B cell (primary cell): ENCODE measurements at regions of chr12 and their contacts with region 1.

Region 1: DNA sequence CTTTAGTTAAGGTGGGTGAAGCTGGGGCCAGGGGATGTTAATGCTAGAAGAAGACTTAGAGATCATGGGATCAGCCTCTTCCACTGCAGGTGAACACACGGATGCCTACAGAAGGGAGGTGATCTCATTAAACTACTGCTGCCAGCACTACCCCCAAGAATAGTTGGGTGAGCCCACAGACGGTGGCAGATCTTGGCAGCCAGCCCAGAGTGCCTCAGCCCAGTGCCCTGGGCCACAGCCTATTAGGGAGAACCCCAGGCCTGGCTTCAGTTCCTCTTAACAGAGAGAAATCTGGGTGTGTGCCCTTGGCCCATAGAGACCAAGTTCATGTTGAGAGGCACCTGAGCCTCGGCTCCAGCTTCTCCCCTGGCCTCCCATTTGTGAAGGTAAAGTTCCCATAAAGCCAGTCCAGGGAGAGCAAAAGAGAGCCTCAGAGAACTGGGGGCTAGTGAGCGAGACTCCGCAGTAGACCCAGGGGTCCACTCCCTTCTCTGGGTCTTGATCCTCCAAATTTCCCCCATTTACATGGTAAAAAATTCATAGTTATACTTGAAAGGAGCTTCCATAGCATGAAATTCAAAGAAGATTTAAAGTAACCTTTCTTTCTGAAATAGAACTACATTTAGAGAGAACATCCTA is 125.0 kb upstream of the CCND2 start:
- DNase-seq: peak; percentile 96
- ATAC-seq: peak; percentile 89
- H3K4me3 ChIP-seq: peak overlapping the region in 1 of 5 experiments; percentile 6
- H3K4me3 Mint-ChIP-seq: peak overlapping the region; percentile 84
- H3K27ac ChIP-seq: peak overlapping the region; percentile 80 to 90
- H3K27ac Mint-ChIP-seq: peak overlapping the region; percentile 91
- H3K4me1 ChIP-seq: peaks cover 73 to 88% of the 10 kb centered on the region in 2 donors
- H3K4me1 Mint-ChIP-seq: peaks cover 90% of the 10 kb centered on the region
- H3K27me3 ChIP-seq: no peaks in the 10 kb centered on the region
- H3K27me3 Mint-ChIP-seq: no peaks in the 10 kb centered on the region
- CTCF ChIP-seq: no peak

Region 2: GRCh38 chr12:3646561-3647241 is 501.8 kb before region 1 on chr12:
- CTCF ChIA-PET with region 1: no interaction called
- POLR2A ChIA-PET with region 1: no interaction called
- intact Hi-C with region 1: no loop called
- DNase-seq: no peak
- ATAC-seq: no peak
- H3K4me3 ChIP-seq: no peak overlapping the region
- H3K4me3 Mint-ChIP-seq: peak overlapping the region; percentile 15
- H3K27ac ChIP-seq: peak overlapping the region in 1 of 2 donors; percentile 30
- H3K27ac Mint-ChIP-seq: peak overlapping the region; percentile 57
- H3K4me1 ChIP-seq: peaks cover 17 to 20% of the 10 kb centered on the region in 2 donors
- H3K4me1 Mint-ChIP-seq: peaks cover 27% of the 10 kb centered on the region
- H3K27me3 ChIP-seq: no peaks in the 10 kb centered on the region
- H3K27me3 Mint-ChIP-seq: no peaks in the 10 kb centered on the region
- CTCF ChIP-seq: no peak

Region 3: GRCh38 chr12:3820122-3820521 is 328.4 kb before region 1 on chr12:
- CTCF ChIA-PET with region 1: no interaction called
- POLR2A ChIA-PET with region 1: no interaction called
- intact Hi-C with region 1: no loop called
- DNase-seq: no peak
- ATAC-seq: no peak
- H3K4me3 ChIP-seq: no peak overlapping the region
- H3K4me3 Mint-ChIP-seq: no peak overlapping the region
- H3K27ac ChIP-seq: no peak overlapping the region
- H3K27ac Mint-ChIP-seq: no peak overlapping the region
- H3K4me1 ChIP-seq: no peaks in the 10 kb centered on the region
- H3K4me1 Mint-ChIP-seq: peaks cover 6% of the 10 kb centered on the region
- H3K27me3 ChIP-seq: no peaks in the 10 kb centered on the region
- H3K27me3 Mint-ChIP-seq: no peaks in the 10 kb centered on the region
- CTCF ChIP-seq: no peak

Region 4: DNA sequence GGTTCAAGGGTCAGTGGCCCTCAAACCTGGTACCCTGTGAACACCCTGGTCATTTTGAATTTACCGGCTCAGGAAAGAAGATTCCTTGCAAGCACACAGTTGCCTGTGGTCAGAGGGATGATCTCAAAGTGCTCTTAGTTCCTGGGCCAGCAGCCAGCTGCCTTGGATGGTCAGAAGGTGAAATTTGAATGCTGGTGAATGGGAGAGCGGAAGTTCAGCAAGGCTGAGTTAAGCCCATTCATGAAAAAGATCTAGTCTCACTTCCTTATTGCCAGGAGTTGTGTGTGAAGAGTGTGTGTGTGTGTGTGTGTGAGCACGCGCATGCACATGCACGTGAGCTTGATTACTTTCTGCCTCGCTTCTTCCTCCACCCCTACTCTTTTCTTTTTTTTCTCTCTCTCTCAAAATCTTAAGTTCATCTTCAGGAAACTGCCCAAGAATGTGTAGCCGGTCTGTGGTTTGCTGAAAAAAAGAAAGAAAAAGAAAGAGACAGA is 30.5 kb before region 1 on chr12:
- CTCF ChIA-PET with region 1: interaction called, 16 read pairs
- POLR2A ChIA-PET with region 1: interaction called, 7 read pairs
- intact Hi-C with region 1: loop called (anchors 1 kb)
- DNase-seq: peak; percentile 90
- ATAC-seq: peak; percentile 90
- H3K4me3 ChIP-seq: peak overlapping the region in 3 of 5 experiments; percentile 21 to 56 (median 34)
- H3K4me3 Mint-ChIP-seq: peak overlapping the region; percentile 78
- H3K27ac ChIP-seq: peak overlapping the region; percentile 47 to 59
- H3K27ac Mint-ChIP-seq: peak overlapping the region; percentile 85
- H3K4me1 ChIP-seq: peaks cover 49 to 51% of the 10 kb centered on the region in 2 donors
- H3K4me1 Mint-ChIP-seq: peaks cover 54% of the 10 kb centered on the region
- H3K27me3 ChIP-seq: peaks cover 0 to 1% (median 0%) of the 10 kb centered on the region in 4 experiments
- H3K27me3 Mint-ChIP-seq: no peaks in the 10 kb centered on the region
- CTCF ChIP-seq: no peak

Region 5: GRCh38 chr12:4135919-4136605 is 12.5 kb before region 1 on chr12:
- CTCF ChIA-PET with region 1: interaction called, 5 read pairs
- POLR2A ChIA-PET with region 1: no interaction called
- intact Hi-C with region 1: loop called (anchors 1 kb)
- DNase-seq: peak; percentile 82
- ATAC-seq: peak; percentile 85
- H3K4me3 ChIP-seq: no peak overlapping the region
- H3K4me3 Mint-ChIP-seq: peak overlapping the region; percentile 11
- H3K27ac ChIP-seq: peak overlapping the region; percentile 5 to 39
- H3K27ac Mint-ChIP-seq: peak overlapping the region; percentile 61
- H3K4me1 ChIP-seq: peaks cover 41 to 50% of the 10 kb centered on the region in 2 donors
- H3K4me1 Mint-ChIP-seq: peaks cover 50% of the 10 kb centered on the region
- H3K27me3 ChIP-seq: no peaks in the 10 kb centered on the region
- H3K27me3 Mint-ChIP-seq: no peaks in the 10 kb centered on the region
- CTCF ChIP-seq: no peak

Region 6: GRCh38 chr12:4164559-4165558 is 16.3 kb after region 1 on chr12:
- CTCF ChIA-PET with region 1: interaction called, 8 read pairs
- POLR2A ChIA-PET with region 1: interaction called, 10 read pairs
- intact Hi-C with region 1: loop called (anchors 1 kb)
- DNase-seq: peak; percentile 80
- ATAC-seq: peak; percentile 77
- H3K4me3 ChIP-seq: peak overlapping the region; percentile 4 to 75 (median 65)
- H3K4me3 Mint-ChIP-seq: peak overlapping the region; percentile 88
- H3K27ac ChIP-seq: peak overlapping the region; percentile 77 to 95
- H3K27ac Mint-ChIP-seq: peak overlapping the region; percentile 90
- H3K4me1 ChIP-seq: peaks cover 34 to 35% of the 10 kb centered on the region in 2 donors
- H3K4me1 Mint-ChIP-seq: peaks cover 40% of the 10 kb centered on the region
- H3K27me3 ChIP-seq: no peaks in the 10 kb centered on the region
- H3K27me3 Mint-ChIP-seq: no peaks in the 10 kb centered on the region
- CTCF ChIP-seq: no peak

Region 7: GRCh38 chr12:4203772-4204376 is 55.3 kb after region 1 on chr12:
- CTCF ChIA-PET with region 1: interaction called, 3 read pairs
- POLR2A ChIA-PET with region 1: no interaction called
- intact Hi-C with region 1: loop called (anchors 1 kb)
- DNase-seq: peak; percentile 50
- ATAC-seq: no peak
- H3K4me3 ChIP-seq: no peak overlapping the region
- H3K4me3 Mint-ChIP-seq: peak overlapping the region; percentile 50
- H3K27ac ChIP-seq: no peak overlapping the region
- H3K27ac Mint-ChIP-seq: peak overlapping the region; percentile 53
- H3K4me1 ChIP-seq: peaks cover 52 to 54% of the 10 kb centered on the region in 2 donors
- H3K4me1 Mint-ChIP-seq: peaks cover 58% of the 10 kb centered on the region
- H3K27me3 ChIP-seq: no peaks in the 10 kb centered on the region
- H3K27me3 Mint-ChIP-seq: no peaks in the 10 kb centered on the region
- CTCF ChIP-seq: no peak

Region 8: GRCh38 chr12:4215229-4216186 is 67.0 kb after region 1 on chr12:
- CTCF ChIA-PET with region 1: interaction called, 5 read pairs
- POLR2A ChIA-PET with region 1: interaction called, 4 read pairs
- intact Hi-C with region 1: loop called (anchors 1 kb)
- DNase-seq: peak; percentile 91
- ATAC-seq: peak; percentile 90
- H3K4me3 ChIP-seq: peak overlapping the region; percentile 28 to 53 (median 34)
- H3K4me3 Mint-ChIP-seq: peak overlapping the region; percentile 87
- H3K27ac ChIP-seq: peak overlapping the region; percentile 89 to 94
- H3K27ac Mint-ChIP-seq: peak overlapping the region; percentile 94
- H3K4me1 ChIP-seq: peaks cover 32 to 41% of the 10 kb centered on the region in 2 donors
- H3K4me1 Mint-ChIP-seq: peaks cover 41% of the 10 kb centered on the region
- H3K27me3 ChIP-seq: no peaks in the 10 kb centered on the region
- H3K27me3 Mint-ChIP-seq: no peaks in the 10 kb centered on the region
- CTCF ChIP-seq: no peak

Region 9: GRCh38 chr12:4320853-4321701 is 172.5 kb after region 1 on chr12 and contains the start of gene TIGAR:
- CTCF ChIA-PET with region 1: no interaction called
- POLR2A ChIA-PET with region 1: no interaction called
- intact Hi-C with region 1: loop called (anchors 2 kb)
- DNase-seq: peak; percentile 95
- ATAC-seq: peak; percentile 97
- H3K4me3 ChIP-seq: peak within 1 kb of the TSS; percentile 69 to 98 (median 90)
- H3K4me3 Mint-ChIP-seq: peak within 1 kb of the TSS; percentile 94
- H3K27ac ChIP-seq: peak within 1 kb of the TSS; percentile 90 to 91
- H3K27ac Mint-ChIP-seq: peak within 1 kb of the TSS; percentile 88
- H3K4me1 ChIP-seq: peaks cover 26 to 30% of the 10 kb centered on the region in 2 donors
- H3K4me1 Mint-ChIP-seq: peaks cover 32% of the 10 kb centered on the region
- H3K27me3 ChIP-seq: no peaks in the 10 kb centered on the region
- H3K27me3 Mint-ChIP-seq: no peaks in the 10 kb centered on the region
- CTCF ChIP-seq: no peak
- total RNA-seq, gene TIGAR: 6.6 and 14.2 TPM in 2 replicates